AG04449 (cell line): ENCODE measurements at regions of chr20 and their contacts with region 1.

Region 1: DNA sequence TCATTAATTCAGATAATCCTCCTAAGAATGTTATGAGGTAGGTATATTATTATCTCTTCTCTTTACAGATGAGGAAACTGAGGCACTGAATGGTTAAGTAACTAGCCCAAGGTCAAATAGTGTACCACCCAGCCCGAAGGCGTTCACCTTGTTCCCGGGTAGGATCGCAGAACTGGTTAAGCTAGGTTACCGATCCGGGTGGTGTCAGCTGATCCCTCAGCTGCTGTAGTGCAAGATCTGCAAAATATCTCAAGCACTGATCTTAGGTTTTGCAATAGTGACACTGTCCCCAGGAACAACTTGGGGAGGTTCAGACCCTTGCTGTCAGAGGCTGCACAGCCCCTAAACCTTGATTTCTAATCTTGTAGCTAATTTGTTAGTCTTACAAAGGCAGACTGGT is 28.2 kb downstream of the SLC52A3 start:
- DNase-seq: no peak
- H3K4me3 ChIP-seq: no peak overlapping the region
- CTCF ChIP-seq: no peak

Region 2: GRCh38 chr20:728248-728944 is 11.7 kb before region 1 on chr20:
- CTCF ChIA-PET with region 1: interaction called, 24 read pairs
- POLR2A ChIA-PET with region 1: no interaction called
- DNase-seq: no peak
- H3K4me3 ChIP-seq: peak overlapping the region; percentile 38
- CTCF ChIP-seq: peak; percentile 70

Region 3: GRCh38 chr20:750801-751200 is 10.7 kb after region 1 on chr20:
- CTCF ChIA-PET with region 1: interaction called, 21 read pairs
- POLR2A ChIA-PET with region 1: no interaction called
- DNase-seq: no peak
- H3K4me3 ChIP-seq: no peak overlapping the region
- CTCF ChIP-seq: no peak